ENCODE measurements at regions of chr13 and their contacts with region 1.

Region 1: GRCh38 chr13:20495082-20496023 is 30.3 kb downstream of the CRYL1 start:
- DNase-seq: peak; percentile 62 to 70 (median 68)
- H3K4me3 ChIP-seq: no peak overlapping the region
- H3K4me3 Mint-ChIP-seq: no peak overlapping the region
- H3K27ac ChIP-seq: no peak overlapping the region
- H3K27ac Mint-ChIP-seq: peak overlapping the region in 1 of 7 donors; percentile 32
- H3K4me1 ChIP-seq: peaks cover 6% of the 10 kb centered on the region
- H3K4me1 Mint-ChIP-seq: peaks cover 0 to 7% (median 2%) of the 10 kb centered on the region in 4 donors
- H3K27me3 ChIP-seq: no peaks in the 10 kb centered on the region
- H3K27me3 Mint-ChIP-seq: no peaks in the 10 kb centered on the region

Region 2: DNA sequence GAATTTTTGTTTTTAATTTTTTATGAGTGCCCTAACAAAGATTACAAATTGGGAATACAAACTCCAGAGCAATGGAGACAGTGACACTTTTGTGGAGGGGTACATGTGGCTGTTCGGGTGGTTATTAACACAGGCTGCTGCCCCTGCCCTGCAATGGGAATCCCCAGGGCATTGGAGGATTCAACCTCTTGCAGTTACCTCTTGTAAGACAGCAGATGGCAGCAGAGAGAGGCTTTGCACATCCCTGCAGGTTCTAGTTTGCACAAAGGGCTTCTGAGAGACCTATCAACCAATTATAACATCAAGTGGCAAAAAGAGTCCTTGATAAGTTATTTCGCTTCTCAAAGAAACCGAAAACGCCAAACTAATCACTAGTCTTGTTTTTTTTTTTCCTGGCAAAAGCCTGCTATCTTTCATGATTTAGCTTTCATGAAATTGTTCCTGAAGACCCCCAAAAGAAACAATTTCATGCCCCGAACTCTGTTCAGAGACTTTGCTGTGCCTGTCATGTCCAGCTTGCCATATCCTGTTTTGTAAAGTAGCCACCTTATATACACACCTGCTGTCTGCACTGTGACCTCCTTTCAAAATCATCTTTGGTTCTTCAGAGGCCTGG is 313.0 kb before region 1 on chr13:
- CTCF ChIA-PET with region 1: interaction called, 3 read pairs
- POLR2A ChIA-PET with region 1: no interaction called
- intact Hi-C with region 1: loop called (anchors 5 kb)
- DNase-seq: peak in 4 of 5 donors; percentile 63 to 73 (median 68)
- H3K4me3 ChIP-seq: no peak overlapping the region
- H3K4me3 Mint-ChIP-seq: no peak overlapping the region
- H3K27ac ChIP-seq: no peak overlapping the region
- H3K27ac Mint-ChIP-seq: no peak overlapping the region
- H3K4me1 ChIP-seq: no peaks in the 10 kb centered on the region
- H3K4me1 Mint-ChIP-seq: peaks cover 0 to 2% (median 0%) of the 10 kb centered on the region in 4 donors
- H3K27me3 ChIP-seq: peaks cover 7% of the 10 kb centered on the region
- H3K27me3 Mint-ChIP-seq: peaks cover 25 to 34% of the 10 kb centered on the region in 2 donors

Region 3: GRCh38 chr13:20221772-20222171 is 273.6 kb before region 1 on chr13:
- CTCF ChIA-PET with region 1: no interaction called
- POLR2A ChIA-PET with region 1: no interaction called
- intact Hi-C with region 1: no loop called
- DNase-seq: no peak
- H3K4me3 ChIP-seq: no peak overlapping the region
- H3K4me3 Mint-ChIP-seq: no peak overlapping the region
- H3K27ac ChIP-seq: no peak overlapping the region
- H3K27ac Mint-ChIP-seq: no peak overlapping the region
- H3K4me1 ChIP-seq: peaks cover 5% of the 10 kb centered on the region
- H3K4me1 Mint-ChIP-seq: peaks cover 4 to 11% (median 5%) of the 10 kb centered on the region in 4 donors
- H3K27me3 ChIP-seq: no peaks in the 10 kb centered on the region
- H3K27me3 Mint-ChIP-seq: peaks cover 4 to 7% of the 10 kb centered on the region in 2 donors

Region 4: DNA sequence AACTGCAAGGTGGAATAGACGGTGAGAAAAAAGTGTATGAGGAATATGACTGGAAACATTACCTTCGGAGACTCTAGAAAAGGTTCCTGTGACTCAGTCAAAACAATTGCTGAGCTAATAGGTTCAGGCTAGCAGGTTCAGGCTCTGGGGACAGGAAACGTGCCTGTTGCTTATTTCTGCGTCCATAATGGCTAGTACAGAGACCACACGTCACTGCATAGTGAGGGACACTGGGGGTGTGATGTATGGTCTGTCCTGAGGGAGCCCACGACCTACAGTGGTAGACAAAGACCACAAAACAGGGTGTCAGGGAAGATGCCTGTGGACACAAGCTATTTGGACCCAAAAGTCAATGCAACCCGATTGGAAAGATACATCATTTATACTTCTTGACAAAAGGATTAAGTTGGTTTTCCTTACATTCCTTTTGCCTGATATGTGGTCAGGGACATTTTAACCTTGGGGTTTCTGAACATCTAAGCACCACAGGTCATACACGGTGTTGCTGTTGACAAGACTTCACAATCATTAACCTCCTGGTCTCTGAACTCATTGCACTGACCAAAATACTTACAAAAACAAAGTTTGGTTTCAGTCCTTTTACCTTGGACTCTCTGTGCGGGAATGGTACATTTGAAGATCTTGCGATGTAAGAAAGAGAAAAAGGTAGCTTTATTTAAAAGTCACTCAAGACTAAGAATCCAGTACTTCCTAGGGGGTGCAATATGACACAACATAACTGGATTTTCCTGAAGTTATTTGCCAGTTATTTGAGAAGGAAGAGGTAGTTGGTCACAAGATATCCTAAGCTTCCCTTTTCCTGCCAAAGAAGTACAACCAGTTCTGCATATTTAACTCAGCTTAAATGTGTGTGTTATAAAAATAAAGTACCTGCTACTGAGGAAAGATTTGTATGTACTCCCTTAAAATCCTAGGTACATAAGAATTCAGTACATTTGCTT is 10.3 kb after region 1 on chr13:
- CTCF ChIA-PET with region 1: interaction called, 21 read pairs
- POLR2A ChIA-PET with region 1: no interaction called
- intact Hi-C with region 1: no loop called
- DNase-seq: no peak
- H3K4me3 ChIP-seq: no peak overlapping the region
- H3K4me3 Mint-ChIP-seq: no peak overlapping the region
- H3K27ac ChIP-seq: no peak overlapping the region
- H3K27ac Mint-ChIP-seq: peak overlapping the region in 1 of 7 donors; percentile 4
- H3K4me1 ChIP-seq: no peaks in the 10 kb centered on the region
- H3K4me1 Mint-ChIP-seq: no peaks in the 10 kb centered on the region
- H3K27me3 ChIP-seq: no peaks in the 10 kb centered on the region
- H3K27me3 Mint-ChIP-seq: no peaks in the 10 kb centered on the region

Region 5: DNA sequence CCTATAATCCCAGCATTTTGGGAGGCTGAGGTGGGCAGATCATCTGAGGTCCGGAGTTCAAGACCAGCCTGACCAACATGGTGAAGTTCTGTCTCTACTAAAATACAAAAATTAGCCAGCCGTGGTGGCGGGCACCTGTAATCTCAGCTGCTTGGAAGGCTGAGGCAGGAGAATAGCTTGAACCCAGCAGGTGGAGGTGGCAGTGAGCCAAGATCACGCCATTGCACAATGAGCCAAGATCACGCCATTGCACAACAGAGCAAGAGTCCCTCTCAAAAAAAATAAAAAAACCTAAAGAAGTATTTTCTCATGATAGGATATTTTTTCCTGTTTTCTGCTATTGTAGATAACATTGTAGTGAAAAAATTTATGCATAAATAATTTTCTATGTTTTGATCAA is 84.9 kb after region 1 on chr13:
- CTCF ChIA-PET with region 1: interaction called, 3 read pairs
- POLR2A ChIA-PET with region 1: no interaction called
- intact Hi-C with region 1: loop called (anchors 5 kb)
- DNase-seq: no peak
- H3K4me3 ChIP-seq: no peak overlapping the region
- H3K4me3 Mint-ChIP-seq: no peak overlapping the region
- H3K27ac ChIP-seq: no peak overlapping the region
- H3K27ac Mint-ChIP-seq: no peak overlapping the region
- H3K4me1 ChIP-seq: no peaks in the 10 kb centered on the region
- H3K4me1 Mint-ChIP-seq: peaks cover 0 to 2% (median 0%) of the 10 kb centered on the region in 4 donors
- H3K27me3 ChIP-seq: no peaks in the 10 kb centered on the region
- H3K27me3 Mint-ChIP-seq: no peaks in the 10 kb centered on the region

Region 6: DNA sequence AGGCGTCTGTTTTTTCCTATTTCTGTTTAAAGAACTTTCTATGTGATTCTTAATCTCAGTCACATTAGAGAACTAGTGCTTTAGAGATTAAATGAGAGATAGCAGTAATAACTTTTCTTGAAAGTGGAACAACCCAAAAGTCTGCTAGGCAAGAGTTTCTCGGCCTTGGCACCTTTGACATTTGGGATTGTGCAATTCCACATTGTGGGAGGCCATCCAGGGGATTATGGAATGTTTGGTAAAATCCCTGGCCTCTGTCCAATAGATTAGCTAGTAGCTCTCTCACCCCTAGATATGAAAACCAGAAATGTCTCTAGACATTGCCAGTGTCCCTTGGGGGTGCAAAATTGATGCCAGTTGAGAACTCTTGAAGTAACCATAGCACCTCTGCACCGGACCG is 163.1 kb after region 1 on chr13:
- CTCF ChIA-PET with region 1: no interaction called
- POLR2A ChIA-PET with region 1: no interaction called
- intact Hi-C with region 1: no loop called
- DNase-seq: no peak
- H3K4me3 ChIP-seq: no peak overlapping the region
- H3K4me3 Mint-ChIP-seq: no peak overlapping the region
- H3K27ac ChIP-seq: no peak overlapping the region
- H3K27ac Mint-ChIP-seq: no peak overlapping the region
- H3K4me1 ChIP-seq: no peaks in the 10 kb centered on the region
- H3K4me1 Mint-ChIP-seq: no peaks in the 10 kb centered on the region
- H3K27me3 ChIP-seq: no peaks in the 10 kb centered on the region
- H3K27me3 Mint-ChIP-seq: no peaks in the 10 kb centered on the region

Region 7: DNA sequence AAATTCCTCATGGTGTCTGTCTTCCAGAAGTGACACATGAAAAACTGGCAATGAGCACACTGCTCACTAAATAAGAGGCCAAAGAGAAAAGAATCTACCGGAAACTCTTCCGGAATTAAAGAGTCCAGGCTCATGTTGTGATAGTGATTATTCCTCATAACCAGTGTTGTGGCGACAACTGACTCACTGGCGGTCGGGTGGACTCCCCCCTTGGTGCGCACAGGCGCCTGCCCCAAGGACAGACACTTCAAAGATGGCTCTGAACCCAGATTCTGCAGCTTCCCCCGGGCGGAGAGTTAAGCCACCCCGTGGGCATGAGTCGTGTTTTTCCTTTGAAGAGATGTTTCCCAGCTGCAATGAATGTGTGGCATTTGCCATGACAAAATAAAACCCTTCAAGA is 218.4 kb after region 1 on chr13:
- CTCF ChIA-PET with region 1: interaction called, 23 read pairs
- POLR2A ChIA-PET with region 1: no interaction called
- intact Hi-C with region 1: loop called (anchors 1 kb)
- DNase-seq: no peak
- H3K4me3 ChIP-seq: no peak overlapping the region
- H3K4me3 Mint-ChIP-seq: no peak overlapping the region
- H3K27ac ChIP-seq: no peak overlapping the region
- H3K27ac Mint-ChIP-seq: no peak overlapping the region
- H3K4me1 ChIP-seq: peaks cover 6% of the 10 kb centered on the region
- H3K4me1 Mint-ChIP-seq: peaks cover 4 to 10% (median 7%) of the 10 kb centered on the region in 4 donors
- H3K27me3 ChIP-seq: no peaks in the 10 kb centered on the region
- H3K27me3 Mint-ChIP-seq: peaks cover 3 to 12% of the 10 kb centered on the region in 2 donors